GM10248 (cell line): ENCODE measurements at regions of chr1 and their contacts with region 1.

Region 1: GRCh38 chr1:32702599-32703478 is at the start of gene SYNC:
- DNase-seq: peak; percentile 51
- CTCF ChIP-seq: no peak

Region 2: DNA sequence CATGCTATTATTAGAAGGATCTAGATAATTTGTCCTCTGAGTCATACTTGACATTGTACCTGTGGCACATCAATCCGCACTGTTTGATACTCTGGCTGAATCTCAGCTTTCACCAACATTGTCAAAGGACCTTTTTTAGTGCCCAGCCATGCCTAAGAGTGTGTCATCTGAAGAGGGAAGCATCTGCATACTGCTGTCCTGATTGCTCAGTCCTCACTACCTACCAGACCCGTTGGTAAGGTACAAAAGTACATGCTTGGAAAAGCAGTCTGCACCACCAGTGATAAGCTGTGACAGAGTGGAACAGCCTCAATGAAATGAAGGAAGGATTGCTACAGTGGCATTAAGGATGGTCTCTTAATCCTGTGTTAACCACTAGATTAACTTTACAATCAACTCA is 17.3 kb before region 1 on chr1:
- CTCF ChIA-PET with region 1: interaction called, 21 read pairs
- POLR2A ChIA-PET with region 1: interaction called, 3 read pairs
- DNase-seq: no peak
- CTCF ChIP-seq: no peak

Region 3: DNA sequence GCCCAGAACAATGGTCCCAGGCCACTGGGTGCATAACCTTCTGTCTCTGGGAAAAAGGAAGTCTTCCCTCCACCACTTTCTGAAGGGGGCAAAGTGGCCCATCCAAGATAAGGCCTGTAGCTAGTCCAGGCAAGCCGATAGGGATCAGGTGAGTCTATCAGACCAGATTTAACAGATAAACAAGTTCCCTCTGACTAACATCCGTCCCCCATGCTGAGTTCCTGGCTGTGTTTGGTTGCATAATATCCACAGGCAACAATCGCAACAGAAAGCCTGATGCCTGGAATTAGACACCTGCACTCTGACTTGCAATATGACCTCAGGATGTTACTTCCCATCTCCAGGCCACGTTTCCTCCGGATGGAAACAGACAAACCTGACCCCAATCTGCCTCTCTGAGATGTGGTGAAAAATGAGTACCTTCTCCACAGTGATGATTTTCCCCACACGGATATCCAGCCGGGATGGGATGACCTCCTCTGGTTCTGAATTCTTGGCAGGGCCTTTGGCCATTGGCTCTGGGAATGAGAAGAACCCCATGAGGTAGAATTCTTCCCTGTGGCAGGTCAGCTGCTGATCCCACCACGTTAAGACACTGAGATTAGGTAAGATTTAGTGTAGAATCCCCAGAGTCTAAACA is 77.9 kb after region 1 on chr1:
- CTCF ChIA-PET with region 1: no interaction called
- POLR2A ChIA-PET with region 1: no interaction called
- DNase-seq: no peak
- CTCF ChIP-seq: no peak